CD14-positive monocyte (primary cell): ENCODE measurements at regions of chr9 and their contacts with region 1.

Region 1: DNA sequence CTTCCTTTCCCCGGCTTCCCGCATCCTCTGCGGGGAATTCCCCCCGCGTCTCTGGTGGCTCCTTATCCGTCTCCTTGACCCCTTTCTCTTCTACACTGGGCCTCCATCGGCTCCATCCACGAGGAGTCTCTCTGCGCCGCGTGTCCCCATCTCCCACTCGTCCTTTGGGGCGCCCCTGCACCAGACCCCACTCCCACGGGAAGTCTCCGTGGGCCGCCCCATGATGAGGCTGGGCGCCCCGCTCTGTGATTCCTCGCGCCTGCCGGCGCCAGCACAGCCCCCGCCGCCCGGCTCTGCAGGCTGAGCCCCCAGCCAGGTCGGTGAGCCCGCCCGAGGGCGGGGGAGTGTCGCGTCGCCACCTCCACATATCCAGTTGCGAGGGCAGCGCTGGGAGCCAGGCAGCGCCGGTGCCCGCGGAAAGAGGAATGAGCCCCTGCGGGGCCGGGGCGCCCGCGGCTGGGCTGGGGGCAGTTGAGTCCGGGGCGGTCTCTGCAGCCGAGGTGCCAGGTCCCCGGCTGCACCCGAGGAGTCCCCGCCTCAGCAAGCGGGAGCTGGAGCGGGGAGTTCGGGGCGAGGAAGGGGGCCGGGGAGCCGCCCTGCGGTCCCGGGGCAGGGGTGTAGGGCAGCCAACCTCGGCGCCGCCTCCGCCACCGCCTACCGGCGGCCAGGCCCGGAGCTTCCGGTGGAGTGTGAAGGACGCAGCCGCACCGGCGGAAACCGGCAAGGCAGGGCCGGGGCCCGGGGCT is 2.1 kb upstream of the TRAF1 start:
- DNase-seq: peak; percentile 53 to 68 (median 64)
- H3K4me3 ChIP-seq: peak overlapping the region; percentile 59 to 85 (median 70)
- H3K4me3 Mint-ChIP-seq: peak overlapping the region; percentile 84 to 95
- H3K27ac ChIP-seq: peak overlapping the region; percentile 74 to 97
- H3K27ac Mint-ChIP-seq: peak overlapping the region in 6 of 7 donors; percentile 81 to 92 (median 87)
- H3K4me1 ChIP-seq: peaks cover 70 to 85% of the 10 kb centered on the region in 2 donors
- H3K4me1 Mint-ChIP-seq: peaks cover 71% of the 10 kb centered on the region
- H3K27me3 ChIP-seq: no peaks in the 10 kb centered on the region
- H3K27me3 Mint-ChIP-seq: peaks cover 0 to 2% (median 0%) of the 10 kb centered on the region in 3 donors
- CTCF ChIP-seq: no peak

Region 2: DNA sequence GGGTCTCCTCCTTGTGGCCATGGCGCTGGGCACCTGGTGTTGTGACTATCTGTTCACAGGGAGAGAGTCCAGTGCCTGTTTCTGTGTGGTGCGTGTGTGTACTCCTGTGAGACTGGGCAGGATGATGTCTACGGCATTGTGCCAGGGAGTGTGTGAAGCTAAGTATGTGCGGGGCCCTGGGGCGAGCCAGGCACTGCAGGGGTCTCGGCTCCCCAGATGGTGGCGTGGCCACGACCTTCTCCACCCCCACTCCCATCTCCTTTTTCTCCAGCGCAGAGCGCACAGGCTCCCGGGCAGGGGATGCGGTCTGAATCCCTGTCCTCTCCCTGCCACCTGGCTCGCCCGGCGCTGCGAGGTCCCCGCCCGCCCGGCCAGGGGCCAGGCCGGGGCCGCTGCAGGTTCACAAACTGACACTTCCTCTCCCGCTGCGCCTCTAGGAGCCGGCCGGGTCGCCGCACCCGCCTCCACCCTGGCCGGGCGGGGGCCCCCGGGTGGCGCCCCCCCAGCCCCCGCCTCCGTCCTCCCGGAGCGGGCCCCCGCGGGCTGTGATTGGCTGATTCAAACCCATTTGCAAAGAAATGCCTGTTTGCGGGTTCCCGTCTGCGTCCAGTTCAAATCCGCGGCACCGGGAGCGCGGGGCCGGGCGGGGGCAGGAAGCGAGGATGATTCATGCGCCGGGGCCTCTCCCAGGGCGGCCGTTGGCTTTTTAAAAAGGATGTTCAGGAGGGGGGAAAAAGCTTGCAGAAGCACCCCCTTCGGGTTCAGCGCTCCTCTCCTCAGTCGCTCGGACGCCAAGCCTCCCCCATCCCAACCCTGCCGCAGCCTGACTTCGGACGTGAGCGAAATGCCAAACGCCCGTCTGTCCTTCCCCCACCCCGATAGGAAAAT is 52.5 kb before region 1 on chr9:
- intact Hi-C with region 1: loop called in 1 of 2 experiments (anchors 5 kb)
- DNase-seq: peak; percentile 86 to 91 (median 87)
- H3K4me3 ChIP-seq: peak overlapping the region; percentile 63 to 97 (median 85)
- H3K4me3 Mint-ChIP-seq: peak overlapping the region; percentile 82 to 91
- H3K27ac ChIP-seq: peak overlapping the region; percentile 85 to 88
- H3K27ac Mint-ChIP-seq: peak overlapping the region; percentile 84 to 95 (median 93)
- H3K4me1 ChIP-seq: peaks cover 29 to 31% of the 10 kb centered on the region in 2 donors
- H3K4me1 Mint-ChIP-seq: peaks cover 44% of the 10 kb centered on the region
- H3K27me3 ChIP-seq: no peaks in the 10 kb centered on the region
- H3K27me3 Mint-ChIP-seq: peaks cover 1 to 3% (median 1%) of the 10 kb centered on the region in 3 donors
- CTCF ChIP-seq: no peak

Region 3: GRCh38 chr9:121121582-121122087 is 193.0 kb after region 1 on chr9:
- intact Hi-C with region 1: loop called in 1 of 2 experiments (anchors 5 kb)
- DNase-seq: peak; percentile 91 to 96 (median 94)
- H3K4me3 ChIP-seq: peak overlapping the region; percentile 51 to 82 (median 74)
- H3K4me3 Mint-ChIP-seq: peak overlapping the region; percentile 77 to 90
- H3K27ac ChIP-seq: peak overlapping the region; percentile 28 to 80
- H3K27ac Mint-ChIP-seq: peak overlapping the region; percentile 82 to 95 (median 94)
- H3K4me1 ChIP-seq: peaks cover 19 to 29% of the 10 kb centered on the region in 2 donors
- H3K4me1 Mint-ChIP-seq: peaks cover 26% of the 10 kb centered on the region
- H3K27me3 ChIP-seq: no peaks in the 10 kb centered on the region
- H3K27me3 Mint-ChIP-seq: peaks cover 0 to 1% (median 0%) of the 10 kb centered on the region in 3 donors
- CTCF ChIP-seq: peak; percentile 20